Activated CD8-positive, alpha-beta T cell treated with anti-CD3 and anti-CD28 coated beads, Interleukin-2, amount 10 ng/mL, durations not matched to agents 7 days and 5 days (primary cell): ENCODE measurements at regions of chr1 and their contacts with region 1.

Region 1: GRCh38 chr1:151340870-151341754 is 5.9 kb downstream of the RFX5 start:
- DNase-seq: peak; percentile 68
- ATAC-seq: peak; percentile 80
- H3K4me3 Mint-ChIP-seq: no peak overlapping the region
- H3K27ac Mint-ChIP-seq: peak overlapping the region; percentile 0
- H3K4me1 Mint-ChIP-seq: peaks cover 18% of the 10 kb centered on the region
- H3K27me3 Mint-ChIP-seq: no peaks in the 10 kb centered on the region

Region 2: GRCh38 chr1:151281969-151282882 is 58.9 kb before region 1 on chr1 and contains the start of gene ZNF687:
- CTCF ChIA-PET with region 1: interaction called, 16 read pairs
- POLR2A ChIA-PET with region 1: interaction called, 4 read pairs
- DNase-seq: peak; percentile 99
- ATAC-seq: peak; percentile 94
- H3K4me3 Mint-ChIP-seq: peak within 1 kb of the TSS; percentile 98
- H3K27ac Mint-ChIP-seq: peak within 1 kb of the TSS; percentile 100
- H3K4me1 Mint-ChIP-seq: peaks cover 19% of the 10 kb centered on the region
- H3K27me3 Mint-ChIP-seq: no peaks in the 10 kb centered on the region
- total RNA-seq, gene ZNF687: 25.5 to 26.6 TPM

Region 3: DNA sequence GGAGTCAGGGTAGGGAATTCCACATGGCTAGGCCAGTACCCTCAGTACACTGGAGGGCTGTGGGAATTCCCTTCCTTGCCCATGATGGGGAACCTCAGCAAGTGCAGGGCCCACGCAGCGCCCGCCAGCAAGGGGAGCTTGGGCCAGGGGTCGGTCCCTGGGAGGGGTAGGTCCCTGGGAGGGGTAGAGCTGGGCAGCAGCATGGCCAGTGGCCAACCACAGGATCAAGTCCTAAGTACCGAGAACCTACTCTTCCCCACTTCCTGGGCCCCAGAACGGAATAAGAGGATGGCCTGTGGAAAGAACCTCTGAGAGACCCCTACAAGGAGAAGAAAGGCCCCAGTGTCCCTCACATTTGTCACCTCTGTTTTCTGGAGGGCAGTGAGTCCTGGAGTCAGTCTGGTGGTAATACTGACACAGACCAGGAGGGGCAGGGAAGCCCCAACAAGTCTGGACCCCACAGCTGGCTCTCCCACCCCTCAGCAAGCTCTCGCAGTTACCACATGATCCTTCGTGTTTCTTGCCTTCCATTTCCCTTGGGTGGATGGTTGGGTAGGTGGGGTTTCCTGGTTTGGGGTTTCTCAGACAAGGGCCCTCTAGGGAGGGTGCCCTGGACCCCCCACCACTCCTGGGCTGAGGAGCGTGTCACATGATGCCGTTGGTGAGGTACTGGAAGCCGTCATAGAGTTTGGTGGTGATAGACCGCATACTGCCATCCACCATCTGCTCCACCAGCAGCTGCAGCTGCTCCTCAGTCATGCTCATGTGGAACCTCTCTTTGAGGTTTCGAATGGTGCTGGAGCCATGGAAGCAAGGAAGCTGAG is 48.7 kb before region 1 on chr1:
- CTCF ChIA-PET with region 1: interaction called, 99 read pairs
- POLR2A ChIA-PET with region 1: no interaction called
- DNase-seq: no peak
- ATAC-seq: no peak
- H3K4me3 Mint-ChIP-seq: no peak overlapping the region
- H3K27ac Mint-ChIP-seq: peak overlapping the region; percentile 43
- H3K4me1 Mint-ChIP-seq: peaks cover 5% of the 10 kb centered on the region
- H3K27me3 Mint-ChIP-seq: no peaks in the 10 kb centered on the region

Region 4: GRCh38 chr1:151311589-151312331 is 29.4 kb before region 1 on chr1:
- CTCF ChIA-PET with region 1: interaction called, 56 read pairs
- POLR2A ChIA-PET with region 1: interaction called, 4 read pairs
- DNase-seq: peak; percentile 61
- ATAC-seq: peak; percentile 80
- H3K4me3 Mint-ChIP-seq: no peak overlapping the region
- H3K27ac Mint-ChIP-seq: peak overlapping the region; percentile 43
- H3K4me1 Mint-ChIP-seq: peaks cover 14% of the 10 kb centered on the region
- H3K27me3 Mint-ChIP-seq: no peaks in the 10 kb centered on the region

Region 5: GRCh38 chr1:151318745-151319374 is 22.3 kb before region 1 on chr1:
- CTCF ChIA-PET with region 1: interaction called, 56 read pairs
- POLR2A ChIA-PET with region 1: no interaction called
- DNase-seq: no peak
- ATAC-seq: no peak
- H3K4me3 Mint-ChIP-seq: no peak overlapping the region
- H3K27ac Mint-ChIP-seq: no peak overlapping the region
- H3K4me1 Mint-ChIP-seq: peaks cover 10% of the 10 kb centered on the region
- H3K27me3 Mint-ChIP-seq: no peaks in the 10 kb centered on the region

Region 6: DNA sequence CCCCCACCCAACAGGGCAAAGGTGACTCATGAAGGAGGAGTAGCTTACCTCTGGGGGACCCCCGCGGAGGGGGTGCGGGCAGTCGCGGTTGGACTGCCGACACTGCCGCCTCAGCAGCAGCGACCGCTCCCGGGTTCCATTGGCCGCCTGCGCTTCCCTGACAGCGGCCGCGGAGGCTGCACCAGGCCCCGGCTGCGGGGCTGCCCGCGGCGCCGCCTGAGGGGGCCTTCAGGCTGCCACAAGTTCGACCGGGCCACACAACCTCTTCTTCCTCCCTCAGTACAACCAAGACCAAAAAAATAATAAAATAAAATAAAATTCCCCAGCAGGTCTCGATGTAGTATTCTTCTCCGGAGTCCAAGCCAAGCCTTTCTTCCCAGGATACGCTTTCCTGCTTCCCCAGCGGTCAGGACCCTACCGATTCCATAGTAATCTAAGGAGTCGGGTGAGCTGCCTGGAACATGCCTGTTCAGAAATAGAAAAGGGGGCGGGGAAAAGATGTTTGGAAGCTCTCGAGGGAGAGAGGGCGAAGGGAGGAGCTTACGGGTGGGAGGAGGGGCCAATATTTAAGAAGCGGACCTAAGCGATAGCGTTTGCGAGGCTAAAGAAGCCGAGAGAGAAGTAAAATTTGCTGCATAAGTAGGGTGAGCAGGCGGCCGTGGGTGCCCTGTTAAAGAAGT is 13.7 kb before region 1 on chr1 and contains the start of gene PI4KB:
- CTCF ChIA-PET with region 1: interaction called, 104 read pairs
- POLR2A ChIA-PET with region 1: interaction called, 12 read pairs
- DNase-seq: peak; percentile 96
- ATAC-seq: peak; percentile 97
- H3K4me3 Mint-ChIP-seq: peak within 1 kb of the TSS; percentile 86
- H3K27ac Mint-ChIP-seq: peak within 1 kb of the TSS; percentile 97
- H3K4me1 Mint-ChIP-seq: peaks cover 34% of the 10 kb centered on the region
- H3K27me3 Mint-ChIP-seq: no peaks in the 10 kb centered on the region
- total RNA-seq, gene PI4KB: 56.0 to 70.2 TPM

Region 7: GRCh38 chr1:151399890-151400495 is 58.9 kb after region 1 on chr1:
- CTCF ChIA-PET with region 1: interaction called, 11 read pairs
- POLR2A ChIA-PET with region 1: interaction called, 4 read pairs
- DNase-seq: peak; percentile 38
- ATAC-seq: peak; percentile 12
- H3K4me3 Mint-ChIP-seq: peak overlapping the region; percentile 80
- H3K27ac Mint-ChIP-seq: peak overlapping the region; percentile 99
- H3K4me1 Mint-ChIP-seq: peaks cover 26% of the 10 kb centered on the region
- H3K27me3 Mint-ChIP-seq: peaks cover 7% of the 10 kb centered on the region

Region 8: GRCh38 chr1:151425103-151425502 is 84.0 kb after region 1 on chr1:
- CTCF ChIA-PET with region 1: no interaction called
- POLR2A ChIA-PET with region 1: no interaction called
- DNase-seq: no peak
- ATAC-seq: no peak
- H3K4me3 Mint-ChIP-seq: no peak overlapping the region
- H3K27ac Mint-ChIP-seq: no peak overlapping the region
- H3K4me1 Mint-ChIP-seq: no peaks in the 10 kb centered on the region
- H3K27me3 Mint-ChIP-seq: no peaks in the 10 kb centered on the region